Ascending aorta (tissue), 2 donors: ENCODE measurements at regions of chr19 and their contacts with region 1.

Region 1: GRCh38 chr19:2269244-2269947 is 12.6 kb downstream of the PEAK3 start:
- DNase-seq: peak; percentile 91 to 99
- H3K4me3 ChIP-seq: peak overlapping the region; percentile 95 to 96
- H3K27ac ChIP-seq: peak overlapping the region; percentile 99 to 100
- H3K4me1 ChIP-seq: peaks cover 17 to 41% of the 10 kb centered on the region in 2 donors
- H3K27me3 ChIP-seq: no peaks in the 10 kb centered on the region
- CTCF ChIP-seq: peak in 1 of 3 experiments; percentile 51

Region 2: GRCh38 chr19:2151339-2152229 is 117.8 kb before region 1 on chr19 and contains the start of gene AP3D1:
- intact Hi-C with region 1: loop called (anchors 1 kb)
- DNase-seq: peak; percentile 99 to 100
- H3K4me3 ChIP-seq: peak within 1 kb of the TSS; percentile 82 to 96
- H3K27ac ChIP-seq: peak within 1 kb of the TSS; percentile 83 to 87
- H3K4me1 ChIP-seq: peaks cover 14 to 31% of the 10 kb centered on the region in 2 donors
- H3K27me3 ChIP-seq: no peaks in the 10 kb centered on the region
- CTCF ChIP-seq: peak in 1 of 3 experiments; percentile 38
- total RNA-seq, gene AP3D1: 98.8 TPM

Region 3: GRCh38 chr19:2328401-2329148 is 59.2 kb after region 1 on chr19 and contains the starts of genes LSM7 and SPPL2B:
- intact Hi-C with region 1: loop called (anchors 2 kb)
- DNase-seq: peak; percentile 76 to 94
- H3K4me3 ChIP-seq: peak within 1 kb of the TSS; percentile 73 to 84
- H3K27ac ChIP-seq: peak within 1 kb of the TSS; percentile 48 to 64
- H3K4me1 ChIP-seq: peaks cover 2 to 34% of the 10 kb centered on the region in 2 donors
- H3K27me3 ChIP-seq: no peaks in the 10 kb centered on the region
- CTCF ChIP-seq: no peak
- total RNA-seq, gene LSM7: 31.4 TPM
- total RNA-seq, gene SPPL2B: 95.7 TPM

Region 4: GRCh38 chr19:2636897-2637683 is 367.7 kb after region 1 on chr19:
- intact Hi-C with region 1: loop called (anchors 5 kb)
- DNase-seq: no peak
- H3K4me3 ChIP-seq: peak overlapping the region in 1 of 2 donors; percentile 32
- H3K27ac ChIP-seq: no peak overlapping the region
- H3K4me1 ChIP-seq: peaks cover 15 to 23% of the 10 kb centered on the region in 2 donors
- H3K27me3 ChIP-seq: no peaks in the 10 kb centered on the region
- CTCF ChIP-seq: peak; percentile 87 to 98 (median 94)